Activated CD4-positive, alpha-beta memory T cell treated with anti-CD3 and anti-CD28 coated beads, Interleukin-2, amount 10 ng/mL, durations not matched to agents 7 days and 5 days (primary cell): ENCODE measurements at regions of chr6 and their contacts with region 1.

Region 1: GRCh38 chr6:13795041-13795750 is 19.2 kb downstream of the MCUR1 start:
- DNase-seq: peak; percentile 89
- H3K4me3 Mint-ChIP-seq: no peak overlapping the region
- H3K27ac Mint-ChIP-seq: peak overlapping the region; percentile 28
- H3K4me1 Mint-ChIP-seq: peaks cover 26% of the 10 kb centered on the region
- H3K27me3 Mint-ChIP-seq: no peaks in the 10 kb centered on the region

Region 2: GRCh38 chr6:13807696-13808095 is 12.5 kb after region 1 on chr6:
- CTCF ChIA-PET with region 1: interaction called, 19 read pairs
- POLR2A ChIA-PET with region 1: no interaction called
- DNase-seq: no peak
- H3K4me3 Mint-ChIP-seq: no peak overlapping the region
- H3K27ac Mint-ChIP-seq: no peak overlapping the region
- H3K4me1 Mint-ChIP-seq: peaks cover 21% of the 10 kb centered on the region
- H3K27me3 Mint-ChIP-seq: no peaks in the 10 kb centered on the region

Region 3: DNA sequence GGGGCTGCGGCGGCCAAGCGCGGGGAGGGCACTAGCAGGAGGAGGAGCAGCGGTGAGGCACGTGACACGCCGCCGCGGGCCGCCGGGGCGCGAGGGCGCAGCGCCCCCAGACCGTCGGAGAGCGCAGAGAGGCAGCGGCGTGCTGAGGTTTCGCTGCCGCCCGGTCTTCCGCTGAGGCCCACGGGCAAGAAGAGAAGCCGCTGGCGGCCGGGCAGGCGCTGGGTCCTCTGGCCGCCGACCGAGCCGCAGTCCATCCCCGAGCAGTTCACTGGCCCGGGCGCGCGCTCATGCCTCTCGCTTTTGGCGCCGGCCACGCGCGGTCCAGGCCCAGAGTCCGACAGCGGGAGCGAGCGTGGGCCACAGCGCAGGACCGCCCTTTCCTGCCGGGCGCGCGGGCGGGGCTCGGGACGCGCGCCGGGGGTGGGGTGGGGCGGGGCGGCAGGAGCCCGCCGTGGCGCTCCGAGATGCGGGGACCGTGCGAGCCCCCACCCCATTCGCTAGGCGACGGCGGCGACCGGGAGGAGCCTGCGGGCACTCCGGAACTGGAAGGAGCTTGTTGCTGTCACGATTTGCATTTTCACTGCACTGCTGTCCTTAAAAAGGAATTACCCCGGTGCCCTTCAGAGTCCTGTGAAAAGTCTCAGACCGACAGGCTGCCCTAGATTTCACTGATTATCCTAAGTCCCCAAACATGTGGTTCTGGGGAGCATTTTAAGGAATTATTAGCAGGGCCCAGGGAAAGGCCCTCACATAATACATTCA is 19.2 kb after region 1 on chr6 and contains the start of gene MCUR1:
- CTCF ChIA-PET with region 1: interaction called, 19 read pairs
- POLR2A ChIA-PET with region 1: interaction called, 6 read pairs
- DNase-seq: peak; percentile 85
- H3K4me3 Mint-ChIP-seq: peak within 1 kb of the TSS; percentile 85
- H3K27ac Mint-ChIP-seq: peak within 1 kb of the TSS; percentile 78
- H3K4me1 Mint-ChIP-seq: peaks cover 36% of the 10 kb centered on the region
- H3K27me3 Mint-ChIP-seq: peaks cover 6% of the 10 kb centered on the region
- total RNA-seq, gene MCUR1: 23.1 to 23.4 TPM

Region 4: GRCh38 chr6:13873285-13874190 is 78.3 kb after region 1 on chr6:
- CTCF ChIA-PET with region 1: interaction called, 11 read pairs
- POLR2A ChIA-PET with region 1: no interaction called
- DNase-seq: peak; percentile 69
- H3K4me3 Mint-ChIP-seq: peak overlapping the region; percentile 63
- H3K27ac Mint-ChIP-seq: no peak overlapping the region
- H3K4me1 Mint-ChIP-seq: peaks cover 10% of the 10 kb centered on the region
- H3K27me3 Mint-ChIP-seq: peaks cover 24% of the 10 kb centered on the region